ENCODE measurements at regions of chr3 and their contacts with region 1.

Region 1: GRCh38 chr3:18444595-18445400 is 19.7 kb upstream of the SATB1 start:
- DNase-seq: peak; percentile 83
- H3K4me3 Mint-ChIP-seq: peak overlapping the region; percentile 94
- H3K27ac Mint-ChIP-seq: peak overlapping the region; percentile 97
- H3K4me1 Mint-ChIP-seq: peaks cover 36% of the 10 kb centered on the region
- H3K27me3 Mint-ChIP-seq: no peaks in the 10 kb centered on the region

Region 2: DNA sequence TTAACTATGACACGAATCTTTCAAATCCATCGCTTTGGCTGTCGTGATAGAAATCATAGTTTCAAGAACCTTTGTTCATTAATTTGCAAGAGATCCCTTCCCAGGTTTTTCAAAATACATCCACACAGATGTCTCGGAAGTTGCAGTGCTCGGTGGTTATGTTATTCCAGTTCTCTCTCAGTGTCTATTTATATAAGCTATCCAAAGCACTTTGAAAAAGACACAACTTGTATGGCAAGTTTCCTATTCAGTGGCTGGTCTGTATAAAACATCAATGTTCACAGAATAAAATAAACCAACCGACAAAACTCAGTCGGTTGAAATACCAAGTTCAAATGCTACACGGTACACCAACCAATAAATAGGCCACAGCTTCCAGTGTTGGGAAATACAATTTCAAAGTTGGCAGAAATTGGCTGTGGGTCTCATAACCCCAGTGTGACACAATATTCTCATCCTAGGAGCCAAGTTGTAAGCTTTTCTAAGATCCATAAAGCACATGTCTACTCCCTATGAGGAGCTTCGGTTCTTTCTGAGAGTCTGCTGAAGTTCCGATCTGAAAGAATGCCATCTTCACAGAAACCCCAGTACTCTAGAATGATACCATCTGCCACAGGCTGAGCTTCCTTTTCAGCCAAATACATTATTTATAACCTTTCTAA is 43.4 kb before region 1 on chr3:
- CTCF ChIA-PET with region 1: interaction called, 3 read pairs
- intact Hi-C with region 1: loop called (anchors 5 kb)
- DNase-seq: no peak
- H3K4me3 Mint-ChIP-seq: peak overlapping the region; percentile 49
- H3K27ac Mint-ChIP-seq: peak overlapping the region; percentile 87
- H3K4me1 Mint-ChIP-seq: peaks cover 96% of the 10 kb centered on the region
- H3K27me3 Mint-ChIP-seq: no peaks in the 10 kb centered on the region

Region 3: DNA sequence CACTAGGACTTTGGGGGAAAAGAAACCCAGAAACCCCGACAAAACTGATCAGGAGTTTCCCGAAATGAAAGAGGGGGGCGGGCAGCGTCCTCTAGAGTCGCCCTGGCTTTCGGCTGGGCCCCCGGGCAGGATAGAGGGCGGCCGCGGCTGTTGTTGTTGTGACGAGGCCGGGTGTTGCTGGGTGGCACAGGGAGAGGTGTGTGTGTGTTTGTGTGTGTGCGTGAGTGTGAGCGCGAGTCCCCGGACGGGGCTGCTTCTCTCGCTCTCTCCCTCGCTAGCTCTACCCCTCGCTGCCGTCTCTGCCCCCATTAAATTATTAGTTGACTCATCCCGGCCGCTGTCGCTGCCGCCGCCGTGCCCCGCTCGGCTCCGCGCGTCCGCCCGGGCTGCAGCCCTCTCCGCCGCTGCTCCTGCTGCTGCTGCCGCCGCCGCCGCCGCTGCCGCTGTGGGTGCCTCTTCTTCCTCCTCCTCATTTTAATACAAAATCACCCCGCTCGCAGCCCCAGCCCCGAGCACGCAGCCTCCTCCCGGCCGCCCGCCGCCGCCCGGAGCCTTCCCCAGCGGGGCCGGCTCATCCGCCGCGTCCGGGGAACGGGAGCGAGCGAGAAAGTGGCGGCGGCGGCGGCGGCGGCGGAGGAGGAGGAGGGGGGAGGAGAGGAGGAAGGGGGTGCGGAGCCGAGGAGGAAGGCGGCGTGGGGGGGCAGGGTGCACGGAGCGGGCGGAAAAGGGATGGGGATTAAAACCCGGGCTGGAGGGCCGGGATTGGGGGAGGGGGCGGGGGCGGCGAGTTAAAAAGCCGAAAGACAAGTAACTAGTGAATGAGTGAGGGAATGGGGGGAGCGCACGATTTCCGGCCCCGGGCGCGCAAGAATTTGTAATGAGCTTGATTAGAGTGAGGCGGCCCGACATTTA is 19.8 kb before region 1 on chr3 and contains the start of gene SATB1:
- CTCF ChIA-PET with region 1: no interaction called
- intact Hi-C with region 1: loop called (anchors 1 kb)
- DNase-seq: peak; percentile 84
- H3K4me3 Mint-ChIP-seq: peak within 1 kb of the TSS; percentile 86
- H3K27ac Mint-ChIP-seq: peak within 1 kb of the TSS; percentile 98
- H3K4me1 Mint-ChIP-seq: peaks cover 73% of the 10 kb centered on the region
- H3K27me3 Mint-ChIP-seq: no peaks in the 10 kb centered on the region
- total RNA-seq, gene SATB1: 303 to 305 TPM

Region 4: GRCh38 chr3:18499301-18499700 is 54.5 kb after region 1 on chr3:
- CTCF ChIA-PET with region 1: interaction called, 3 read pairs
- intact Hi-C with region 1: loop called (anchors 1 kb)
- DNase-seq: peak; percentile 42
- H3K4me3 Mint-ChIP-seq: peak overlapping the region; percentile 46
- H3K27ac Mint-ChIP-seq: peak overlapping the region; percentile 83
- H3K4me1 Mint-ChIP-seq: peaks cover 41% of the 10 kb centered on the region
- H3K27me3 Mint-ChIP-seq: no peaks in the 10 kb centered on the region

Region 5: DNA sequence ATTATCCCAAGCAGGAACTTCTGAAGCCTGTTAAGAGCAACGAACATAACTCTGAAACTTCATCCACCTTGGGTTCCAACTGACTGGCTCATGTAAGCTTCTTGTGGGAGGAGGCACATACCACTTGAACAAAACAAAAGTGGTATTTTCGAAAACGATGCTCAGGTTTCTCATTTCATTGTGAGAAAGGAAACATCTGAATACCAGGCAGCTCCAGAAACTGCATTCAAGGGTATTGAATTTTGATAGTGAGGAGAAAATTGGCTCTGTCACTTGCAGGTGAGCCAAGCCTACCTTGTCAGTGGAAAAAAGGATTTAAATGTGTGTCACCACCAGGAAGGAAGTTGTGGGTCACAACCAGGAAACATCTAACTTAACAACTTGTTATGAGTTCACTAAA is 198.5 kb after region 1 on chr3:
- CTCF ChIA-PET with region 1: interaction called, 3 read pairs
- intact Hi-C with region 1: loop called (anchors 1 kb)
- DNase-seq: peak; percentile 36
- H3K4me3 Mint-ChIP-seq: no peak overlapping the region
- H3K27ac Mint-ChIP-seq: peak overlapping the region; percentile 69
- H3K4me1 Mint-ChIP-seq: peaks cover 60% of the 10 kb centered on the region
- H3K27me3 Mint-ChIP-seq: no peaks in the 10 kb centered on the region

Region 6: GRCh38 chr3:18717598-18717997 is 272.8 kb after region 1 on chr3:
- CTCF ChIA-PET with region 1: interaction called, 3 read pairs
- intact Hi-C with region 1: loop called (anchors 1 kb)
- DNase-seq: no peak
- H3K4me3 Mint-ChIP-seq: no peak overlapping the region
- H3K27ac Mint-ChIP-seq: peak overlapping the region; percentile 84
- H3K4me1 Mint-ChIP-seq: peaks cover 71% of the 10 kb centered on the region
- H3K27me3 Mint-ChIP-seq: no peaks in the 10 kb centered on the region

Measured in activated naive CD4-positive, alpha-beta T cell treated with anti-CD3 and anti-CD28 coated beads for 36 hours (primary cell).